Activated CD4-positive, alpha-beta memory T cell treated with anti-CD3 and anti-CD28 coated beads for 36 hours (primary cell): ENCODE measurements at regions of chr6 and their contacts with region 1.

Region 1: GRCh38 chr6:159092631-159093030 is 47.8 kb upstream of the TAGAP start:
- DNase-seq: no peak
- H3K4me3 Mint-ChIP-seq: no peak overlapping the region
- H3K27ac Mint-ChIP-seq: no peak overlapping the region
- H3K4me1 Mint-ChIP-seq: peaks cover 66% of the 10 kb centered on the region
- H3K27me3 Mint-ChIP-seq: no peaks in the 10 kb centered on the region

Region 2: DNA sequence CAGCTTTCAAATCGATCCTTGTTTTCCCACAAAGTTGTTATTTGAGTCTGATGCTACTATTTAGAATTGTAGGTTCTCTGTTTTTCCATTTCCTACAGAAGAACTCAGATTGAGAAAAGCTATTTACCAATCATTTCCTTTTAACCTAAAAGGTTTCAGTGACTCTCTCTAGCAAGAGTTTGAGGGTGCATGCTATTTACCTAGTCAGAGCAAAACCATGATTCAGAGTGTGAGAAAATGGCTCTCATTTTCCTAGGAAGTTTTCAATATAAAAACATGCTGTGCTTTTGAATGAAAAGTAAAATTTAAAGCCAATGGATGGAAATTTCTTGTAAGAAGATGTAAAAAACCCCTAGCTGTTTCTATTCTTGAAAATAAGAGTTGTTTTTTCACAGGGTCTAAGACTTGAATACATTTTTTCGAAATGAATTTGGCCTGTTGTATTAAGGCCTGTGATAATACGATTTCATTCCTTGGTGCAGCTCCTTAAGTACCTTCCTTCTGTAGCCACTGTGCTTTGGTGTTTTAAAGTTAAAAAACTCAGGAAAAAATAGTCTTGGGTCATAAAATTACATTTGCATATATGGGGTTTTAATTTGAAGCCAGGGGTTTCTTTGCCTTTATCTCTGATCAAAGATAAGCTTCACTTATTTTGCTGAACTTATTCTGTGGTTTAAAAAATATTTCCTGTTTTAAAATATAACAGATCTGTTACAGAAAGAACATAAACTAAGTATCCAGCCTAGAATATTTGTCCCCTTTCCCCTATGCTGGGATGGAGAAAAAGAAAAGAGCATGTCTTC is 74.7 kb before region 1 on chr6:
- CTCF ChIA-PET with region 1: interaction called, 4 read pairs
- POLR2A ChIA-PET with region 1: interaction called, 12 read pairs
- intact Hi-C with region 1: no loop called
- DNase-seq: no peak
- H3K4me3 Mint-ChIP-seq: no peak overlapping the region
- H3K27ac Mint-ChIP-seq: peak overlapping the region; percentile 79
- H3K4me1 Mint-ChIP-seq: peaks cover 55% of the 10 kb centered on the region
- H3K27me3 Mint-ChIP-seq: no peaks in the 10 kb centered on the region

Region 3: DNA sequence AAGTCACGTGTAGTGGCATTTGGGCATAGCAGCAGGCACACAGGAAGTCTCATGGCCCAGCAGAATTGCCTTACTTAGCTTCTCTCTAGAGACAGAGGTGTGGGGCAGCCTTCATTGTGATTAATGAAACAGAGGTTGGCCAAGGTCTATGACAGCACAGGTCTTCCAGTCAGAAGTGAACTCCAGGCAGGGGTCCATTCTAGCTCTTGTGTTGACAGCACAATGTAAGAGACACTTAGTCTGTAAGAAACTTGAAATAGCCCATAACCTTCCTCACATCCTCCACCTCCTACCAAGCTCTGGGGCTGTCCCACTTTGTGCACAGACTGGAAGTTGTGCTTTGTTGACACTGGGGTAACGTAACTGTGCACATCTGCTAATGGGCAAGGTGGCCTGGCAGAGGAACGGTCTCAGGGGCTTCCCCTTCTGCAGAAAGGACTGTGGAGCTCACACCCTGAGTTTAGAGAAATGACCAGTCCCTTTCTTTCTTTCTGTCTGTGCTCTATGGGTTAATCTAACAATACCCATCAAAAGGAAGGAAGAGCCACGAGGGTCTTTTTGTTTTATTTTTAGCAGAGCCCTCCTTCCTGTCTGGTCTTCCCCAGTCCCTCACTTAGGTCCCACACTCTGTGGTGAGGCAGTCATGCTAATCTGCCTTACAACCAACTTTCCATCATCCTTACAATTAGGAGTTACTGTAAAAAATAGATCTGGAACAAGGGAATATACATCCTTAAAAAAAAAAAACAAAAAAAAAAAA is 12.2 kb before region 1 on chr6:
- CTCF ChIA-PET with region 1: no interaction called
- POLR2A ChIA-PET with region 1: interaction called, 3 read pairs
- intact Hi-C with region 1: loop called (anchors 2 kb)
- DNase-seq: peak; percentile 54
- H3K4me3 Mint-ChIP-seq: no peak overlapping the region
- H3K27ac Mint-ChIP-seq: peak overlapping the region; percentile 23
- H3K4me1 Mint-ChIP-seq: peaks cover 48% of the 10 kb centered on the region
- H3K27me3 Mint-ChIP-seq: no peaks in the 10 kb centered on the region

Region 4: DNA sequence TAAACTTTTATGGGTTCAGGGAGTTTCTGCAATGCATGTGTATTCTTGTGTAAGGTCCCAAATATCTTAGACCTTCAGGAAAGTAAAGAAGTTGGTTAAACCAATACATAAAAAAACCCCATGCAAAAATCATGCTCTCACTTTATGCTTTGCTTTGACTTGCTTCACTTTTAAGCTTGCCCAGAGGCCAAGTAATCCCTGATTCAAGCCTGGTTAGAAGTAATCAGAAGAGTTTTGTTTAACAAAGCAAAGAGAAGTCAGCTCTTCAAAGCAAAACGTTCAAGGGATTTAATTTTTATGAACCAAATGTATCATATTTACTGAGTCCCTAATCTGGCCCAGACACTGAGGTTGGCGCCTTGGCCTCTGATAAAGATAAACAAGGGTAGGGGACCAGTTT is 49.9 kb after region 1 on chr6:
- CTCF ChIA-PET with region 1: no interaction called
- POLR2A ChIA-PET with region 1: no interaction called
- intact Hi-C with region 1: no loop called
- DNase-seq: no peak
- H3K4me3 Mint-ChIP-seq: no peak overlapping the region
- H3K27ac Mint-ChIP-seq: no peak overlapping the region
- H3K4me1 Mint-ChIP-seq: no peaks in the 10 kb centered on the region
- H3K27me3 Mint-ChIP-seq: peaks cover 14% of the 10 kb centered on the region

Region 5: DNA sequence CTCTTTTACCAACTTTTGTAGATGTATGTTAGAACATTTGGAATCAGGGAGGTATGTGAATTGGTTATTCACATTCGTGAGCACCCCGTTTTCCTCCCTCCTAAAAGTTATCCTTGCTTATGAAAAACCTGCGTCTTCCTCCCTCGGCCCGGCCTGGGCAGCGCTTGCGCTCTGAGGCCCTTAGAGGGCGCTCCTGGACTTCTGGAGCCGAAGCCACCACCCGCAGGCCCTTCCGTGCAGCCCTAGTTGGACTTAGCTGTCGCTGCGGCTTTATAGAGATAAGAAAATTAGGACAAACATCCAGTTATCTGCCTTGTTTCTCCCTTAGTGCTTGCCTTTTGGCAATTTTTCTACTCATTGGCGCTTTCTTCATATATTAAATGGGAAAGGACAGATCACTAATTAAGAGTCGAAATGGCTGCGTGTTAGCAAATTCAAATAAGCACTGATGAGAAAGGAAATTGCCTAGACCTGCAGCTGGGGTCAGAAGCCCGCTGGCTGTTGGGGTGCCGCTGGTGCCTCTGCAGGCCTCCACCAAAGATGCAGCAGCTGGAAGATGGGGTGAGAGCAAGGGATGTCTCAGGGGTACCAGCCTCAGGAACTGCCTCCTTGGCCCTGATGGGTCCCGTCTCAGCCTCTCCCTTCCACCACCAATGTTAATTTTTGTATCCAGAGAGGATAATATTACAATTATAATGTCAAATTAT is 81.8 kb after region 1 on chr6:
- CTCF ChIA-PET with region 1: no interaction called
- POLR2A ChIA-PET with region 1: no interaction called
- intact Hi-C with region 1: no loop called
- DNase-seq: peak; percentile 82
- H3K4me3 Mint-ChIP-seq: no peak overlapping the region
- H3K27ac Mint-ChIP-seq: no peak overlapping the region
- H3K4me1 Mint-ChIP-seq: peaks cover 10% of the 10 kb centered on the region
- H3K27me3 Mint-ChIP-seq: peaks cover 46% of the 10 kb centered on the region